ENCODE measurements at regions of chrX and their contacts with region 1.

Region 1: GRCh38 chrX:17154001-17154400 is 207.5 kb downstream of the REPS2 start:
- DNase-seq: no peak
- H3K4me3 ChIP-seq: no peak overlapping the region
- H3K27ac ChIP-seq: no peak overlapping the region
- H3K4me1 ChIP-seq: no peaks in the 10 kb centered on the region
- H3K27me3 ChIP-seq: no peaks in the 10 kb centered on the region
- CTCF ChIP-seq: no peak
- POLR2A ChIP-seq: no peak

Region 2: GRCh38 chrX:16573781-16574180 is 580.2 kb before region 1 on chrX:
- intact Hi-C with region 1: loop called (anchors 10 kb)
- DNase-seq: no peak
- H3K4me3 ChIP-seq: no peak overlapping the region
- H3K27ac ChIP-seq: no peak overlapping the region
- H3K4me1 ChIP-seq: no peaks in the 10 kb centered on the region
- H3K27me3 ChIP-seq: no peaks in the 10 kb centered on the region
- CTCF ChIP-seq: no peak
- POLR2A ChIP-seq: no peak

Measured in uterus (tissue), 4 donors.